Heart right ventricle (tissue), 16 donors: ENCODE measurements at regions of chrX and their contacts with region 1.

Region 1: GRCh38 chrX:20530406-20530921 is 263.8 kb upstream of the RPS6KA3 start:
- DNase-seq: peak in 1 of 2 donors; percentile 33
- ATAC-seq: peak in 6 of 8 donors; percentile 39 to 73 (median 58)
- H3K4me3 ChIP-seq: peak overlapping the region in 5 of 10 donors; percentile 20 to 33 (median 24)
- H3K27ac ChIP-seq: peak overlapping the region in 2 of 10 donors; percentile 2 to 31
- H3K4me1 ChIP-seq: no peaks in the 10 kb centered on the region
- H3K27me3 ChIP-seq: peaks cover 0 to 78% (median 0%) of the 10 kb centered on the region in 7 donors
- CTCF ChIP-seq: peak; percentile 23 to 78 (median 64)

Region 2: GRCh38 chrX:21374163-21374993 is 843.9 kb after region 1 on chrX and contains the start of gene CNKSR2:
- intact Hi-C with region 1: loop called in 1 of 10 experiments (anchors 10 kb)
- DNase-seq: peak in 1 of 2 donors; percentile 12
- ATAC-seq: peak in 6 of 8 donors; percentile 21 to 74 (median 41)
- H3K4me3 ChIP-seq: peak within 1 kb of the TSS in 9 of 10 donors; percentile 31 to 60 (median 54)
- H3K27ac ChIP-seq: peak within 1 kb of the TSS in 2 of 10 donors; percentile 7 to 26
- H3K4me1 ChIP-seq: peaks cover 0 to 11% (median 0%) of the 10 kb centered on the region in 9 donors
- H3K27me3 ChIP-seq: peaks cover 0 to 56% (median 13%) of the 10 kb centered on the region in 7 donors
- CTCF ChIP-seq: no peak
- total RNA-seq, gene CNKSR2: 0.25 to 1.6 (median 0.50) TPM

Region 3: GRCh38 chrX:21479695-21480270 is 949.3 kb after region 1 on chrX:
- intact Hi-C with region 1: loop called in 8 of 10 experiments (anchors 2 to 10 kb)
- DNase-seq: peak in 1 of 2 donors; percentile 3
- ATAC-seq: peak in 4 of 8 donors; percentile 30 to 69 (median 48)
- H3K4me3 ChIP-seq: no peak overlapping the region
- H3K27ac ChIP-seq: no peak overlapping the region
- H3K4me1 ChIP-seq: no peaks in the 10 kb centered on the region
- H3K27me3 ChIP-seq: no peaks in the 10 kb centered on the region
- CTCF ChIP-seq: peak in 8 of 9 donors; percentile 29 to 67 (median 58)

Region 4: GRCh38 chrX:21725496-21725895 is 1195.0 kb after region 1 on chrX:
- intact Hi-C with region 1: loop called in 2 of 10 experiments (anchors 10 kb)
- DNase-seq: no peak
- ATAC-seq: no peak
- H3K4me3 ChIP-seq: no peak overlapping the region
- H3K27ac ChIP-seq: peak overlapping the region in 1 of 10 donors; percentile 39
- H3K4me1 ChIP-seq: peaks cover 0 to 24% (median 3%) of the 10 kb centered on the region in 9 donors
- H3K27me3 ChIP-seq: peaks cover 0 to 9% (median 0%) of the 10 kb centered on the region in 7 donors
- CTCF ChIP-seq: peak in 5 of 9 donors; percentile 14 to 31 (median 26)

Region 5: GRCh38 chrX:21740329-21741274 is 1210.1 kb after region 1 on chrX:
- intact Hi-C with region 1: loop called in 7 of 10 experiments (anchors 5 to 10 kb)
- DNase-seq: peak; percentile 13 to 43
- ATAC-seq: peak in 7 of 8 donors; percentile 68 to 91 (median 86)
- H3K4me3 ChIP-seq: no peak overlapping the region
- H3K27ac ChIP-seq: peak overlapping the region in 4 of 10 donors; percentile 7 to 43 (median 24)
- H3K4me1 ChIP-seq: peaks cover 0 to 44% (median 5%) of the 10 kb centered on the region in 9 donors
- H3K27me3 ChIP-seq: peaks cover 0 to 31% (median 0%) of the 10 kb centered on the region in 7 donors
- CTCF ChIP-seq: no peak

Region 6: GRCh38 chrX:21745756-21746155 is 1215.3 kb after region 1 on chrX:
- intact Hi-C with region 1: loop called in 6 of 10 experiments (anchors 5 to 10 kb)
- DNase-seq: peak in 1 of 2 donors; percentile 11
- ATAC-seq: no peak
- H3K4me3 ChIP-seq: no peak overlapping the region
- H3K27ac ChIP-seq: no peak overlapping the region
- H3K4me1 ChIP-seq: peaks cover 0 to 51% (median 4%) of the 10 kb centered on the region in 9 donors
- H3K27me3 ChIP-seq: peaks cover 0 to 31% (median 0%) of the 10 kb centered on the region in 7 donors
- CTCF ChIP-seq: peak; percentile 15 to 63 (median 47)

Region 7: DNA sequence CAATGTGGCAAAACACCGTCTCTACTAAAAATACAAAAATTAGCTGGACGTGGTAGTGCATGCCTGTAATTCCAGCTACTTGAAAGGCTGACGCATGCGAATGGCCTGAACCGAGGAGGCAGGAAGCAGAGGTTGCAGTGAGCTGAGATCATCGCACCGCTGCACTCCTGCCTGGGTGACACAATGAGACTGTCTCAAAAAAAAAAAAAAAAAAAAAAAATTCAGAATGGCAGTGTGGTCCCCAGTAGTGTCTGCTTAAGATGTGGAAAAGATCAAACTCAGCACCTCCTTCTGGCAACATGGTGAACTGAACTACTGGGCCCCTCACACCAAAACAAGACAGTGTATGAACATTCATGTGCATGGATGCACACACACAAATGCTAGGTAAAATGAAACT is 1442.3 kb after region 1 on chrX:
- intact Hi-C with region 1: loop called in 3 of 10 experiments (anchors 5 to 10 kb)
- DNase-seq: no peak
- ATAC-seq: peak in 6 of 8 donors; percentile 49 to 88 (median 84)
- H3K4me3 ChIP-seq: no peak overlapping the region
- H3K27ac ChIP-seq: peak overlapping the region in 2 of 10 donors; percentile 11 to 39
- H3K4me1 ChIP-seq: peaks cover 0 to 5% (median 0%) of the 10 kb centered on the region in 9 donors
- H3K27me3 ChIP-seq: no peaks in the 10 kb centered on the region
- CTCF ChIP-seq: no peak